ENCODE measurements at regions of chr21 and their contacts with region 1.

Region 1: DNA sequence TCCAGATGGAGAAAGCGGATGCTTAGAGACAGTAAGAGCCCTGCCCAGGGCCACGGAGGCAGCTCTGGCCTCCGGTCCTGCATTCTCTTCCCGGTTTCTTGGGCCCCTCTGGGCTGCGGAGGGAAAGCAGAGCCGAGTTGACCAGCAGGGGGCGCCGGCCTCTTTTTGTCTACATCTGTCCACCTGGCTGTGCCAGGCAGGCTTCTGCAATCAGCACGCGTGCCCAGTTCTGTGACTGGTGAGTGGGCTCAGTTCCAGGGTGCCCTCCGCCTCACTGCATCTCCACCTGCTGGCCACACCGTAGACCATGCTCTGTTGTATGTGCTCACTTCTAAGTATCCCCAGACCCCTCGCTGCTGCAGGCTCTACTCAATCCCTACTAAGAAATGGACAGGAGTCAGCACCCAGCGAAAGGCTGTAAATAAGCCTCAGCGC is 6.7 kb upstream of the HUNK start:
- DNase-seq: no peak
- H3K4me3 ChIP-seq: no peak overlapping the region
- CTCF ChIP-seq: peak; percentile 84

Region 2: GRCh38 chr21:31855150-31855549 is 10.9 kb before region 1 on chr21:
- CTCF ChIA-PET with region 1: interaction called, 17 read pairs
- POLR2A ChIA-PET with region 1: no interaction called
- DNase-seq: no peak
- H3K4me3 ChIP-seq: no peak overlapping the region
- CTCF ChIP-seq: no peak

Region 3: GRCh38 chr21:31911138-31911907 is 45.2 kb after region 1 on chr21:
- CTCF ChIA-PET with region 1: no interaction called
- POLR2A ChIA-PET with region 1: no interaction called
- DNase-seq: no peak
- H3K4me3 ChIP-seq: no peak overlapping the region
- CTCF ChIP-seq: no peak

Region 4: DNA sequence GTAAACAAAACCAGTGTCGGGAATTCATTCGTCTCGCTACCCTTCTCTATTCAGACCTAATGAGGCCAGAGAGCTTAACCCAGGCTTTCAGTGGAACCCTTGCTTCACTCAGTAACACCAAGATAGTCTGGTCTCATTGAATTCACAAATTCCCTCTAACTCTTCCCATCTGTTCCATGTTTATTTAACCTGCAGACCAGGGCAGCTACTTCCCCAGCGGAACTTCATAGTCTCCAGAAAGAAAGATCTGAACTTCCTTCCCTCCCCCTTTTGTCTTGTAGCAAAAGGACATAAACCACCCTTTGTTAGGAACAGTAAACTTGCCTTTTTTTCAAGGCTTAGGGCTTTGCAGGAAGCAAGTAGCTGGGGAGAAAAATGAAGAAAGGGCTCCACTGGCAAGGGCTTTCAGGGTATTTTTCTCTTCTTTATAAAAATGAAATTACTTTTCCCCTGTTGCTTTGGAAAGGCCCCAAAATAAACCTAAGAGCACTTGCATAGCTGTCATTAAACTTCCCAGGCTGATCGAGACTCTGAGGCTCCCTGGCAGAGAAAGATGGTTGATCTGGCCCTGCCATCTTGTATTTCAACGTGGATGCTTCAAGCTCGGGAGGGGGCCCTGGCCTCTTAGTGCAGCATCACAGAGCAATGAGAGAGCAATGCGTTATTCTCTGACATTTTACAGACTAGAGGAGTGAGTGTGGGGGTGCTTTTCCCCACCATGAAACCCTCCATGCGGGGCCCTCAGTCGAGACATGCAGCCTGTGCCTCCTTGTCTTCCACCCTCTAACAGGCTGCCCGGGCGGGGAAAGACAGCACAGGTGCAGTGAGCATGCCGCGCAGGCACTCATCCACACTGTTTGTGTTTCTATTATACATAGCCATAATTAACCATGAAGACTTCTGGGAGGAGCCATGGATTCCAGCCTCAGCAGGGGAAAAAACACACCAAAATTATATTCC is 382.8 kb after region 1 on chr21:
- CTCF ChIA-PET with region 1: interaction called, 15 read pairs
- POLR2A ChIA-PET with region 1: no interaction called
- DNase-seq: no peak
- H3K4me3 ChIP-seq: no peak overlapping the region
- CTCF ChIP-seq: no peak

Region 5: DNA sequence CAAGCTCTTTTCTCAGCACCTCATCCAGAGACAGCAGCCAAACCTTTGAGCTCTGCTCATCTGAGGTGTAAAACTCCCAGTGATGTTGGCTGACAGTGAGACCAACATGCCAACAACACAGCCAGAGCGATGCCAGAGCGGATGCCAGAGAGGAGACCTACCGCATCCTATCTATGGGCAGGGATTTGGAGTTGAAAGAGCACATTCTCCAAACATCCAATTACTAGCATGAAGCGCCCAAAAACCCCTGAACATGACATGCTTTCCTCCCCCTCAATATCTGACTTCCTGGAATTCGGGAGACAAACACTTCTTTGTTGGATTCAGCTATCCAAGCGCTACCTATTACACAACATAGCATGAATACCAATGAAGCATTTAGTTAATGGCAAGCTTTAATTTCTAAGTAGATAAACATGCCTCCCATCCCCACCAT is 928.6 kb after region 1 on chr21:
- CTCF ChIA-PET with region 1: no interaction called
- POLR2A ChIA-PET with region 1: no interaction called
- DNase-seq: no peak
- H3K4me3 ChIP-seq: no peak overlapping the region
- CTCF ChIP-seq: no peak